ENCODE measurements at regions of chr2 and their contacts with region 1.

Region 1: GRCh38 chr2:121309801-121310200 is 24.8 kb upstream of the TFCP2L1 start:
- DNase-seq: no peak
- H3K4me3 ChIP-seq: no peak overlapping the region
- H3K27ac ChIP-seq: no peak overlapping the region
- H3K4me1 ChIP-seq: no peaks in the 10 kb centered on the region
- H3K27me3 ChIP-seq: peaks cover 9% of the 10 kb centered on the region
- CTCF ChIP-seq: no peak
- EP300 ChIP-seq: no peak
- POLR2A ChIP-seq: no peak

Region 2: DNA sequence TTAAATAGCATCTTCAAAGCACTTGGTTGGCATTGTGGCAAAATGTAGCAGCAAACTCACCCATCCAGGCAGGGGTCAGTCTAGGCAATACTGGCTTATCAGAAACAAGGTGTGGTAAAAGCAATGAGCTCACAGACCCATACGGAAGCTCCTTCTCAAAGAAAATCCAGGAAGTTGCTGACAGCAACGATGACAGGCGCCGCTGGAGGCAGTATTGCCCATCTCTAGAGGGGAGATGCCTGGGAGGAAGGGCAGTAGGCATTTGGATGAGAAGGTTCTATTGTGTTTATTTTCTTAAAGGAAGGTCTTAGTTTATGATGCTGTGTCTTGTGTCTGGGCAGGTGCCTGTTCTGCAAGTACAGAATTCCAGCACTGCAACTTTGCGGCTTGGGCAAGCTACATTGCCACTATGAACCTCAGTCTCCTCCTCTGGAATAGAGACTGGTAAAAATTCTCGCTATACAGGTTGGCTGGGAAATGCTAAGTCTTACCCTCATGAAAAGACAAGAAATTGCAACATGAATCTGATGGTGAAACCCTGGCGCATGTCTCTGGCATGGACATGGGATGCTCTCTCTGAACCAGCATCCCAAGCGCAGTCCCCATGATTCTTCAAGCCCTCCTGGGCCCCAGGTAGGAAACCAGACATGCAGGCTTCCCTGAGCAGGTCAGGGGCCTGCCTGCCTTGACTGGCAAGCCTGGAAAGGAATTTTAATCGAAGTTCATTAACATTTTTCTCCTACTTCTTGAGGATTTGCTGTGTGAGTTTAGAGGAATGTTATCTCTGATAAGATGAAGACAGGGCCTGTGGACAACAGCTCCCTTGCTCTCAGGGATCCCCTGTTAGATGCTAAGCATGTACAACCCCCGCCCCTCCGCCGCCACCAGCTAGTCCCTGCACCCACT is 180.8 kb before region 1 on chr2:
- in situ Hi-C with region 1: loop called in 2 of 4 experiments (anchors 25 kb)
- intact Hi-C with region 1: no loop called
- DNase-seq: peak; percentile 89
- H3K4me3 ChIP-seq: no peak overlapping the region
- H3K27ac ChIP-seq: peak overlapping the region in 2 of 4 donors; percentile 10 to 47
- H3K4me1 ChIP-seq: peaks cover 0 to 8% (median 3%) of the 10 kb centered on the region in 4 donors
- H3K27me3 ChIP-seq: no peaks in the 10 kb centered on the region
- CTCF ChIP-seq: peak; percentile 42 to 89 (median 63)
- EP300 ChIP-seq: peak; percentile 11
- POLR2A ChIP-seq: no peak

Region 3: GRCh38 chr2:121333834-121334558 is 24.2 kb after region 1 on chr2:
- in situ Hi-C with region 1: no loop called
- intact Hi-C with region 1: no loop called
- DNase-seq: no peak
- H3K4me3 ChIP-seq: no peak overlapping the region
- H3K27ac ChIP-seq: no peak overlapping the region
- H3K4me1 ChIP-seq: peaks cover 0 to 11% (median 2%) of the 10 kb centered on the region in 4 donors
- H3K27me3 ChIP-seq: no peaks in the 10 kb centered on the region
- CTCF ChIP-seq: no peak
- EP300 ChIP-seq: no peak
- POLR2A ChIP-seq: no peak

Region 4: DNA sequence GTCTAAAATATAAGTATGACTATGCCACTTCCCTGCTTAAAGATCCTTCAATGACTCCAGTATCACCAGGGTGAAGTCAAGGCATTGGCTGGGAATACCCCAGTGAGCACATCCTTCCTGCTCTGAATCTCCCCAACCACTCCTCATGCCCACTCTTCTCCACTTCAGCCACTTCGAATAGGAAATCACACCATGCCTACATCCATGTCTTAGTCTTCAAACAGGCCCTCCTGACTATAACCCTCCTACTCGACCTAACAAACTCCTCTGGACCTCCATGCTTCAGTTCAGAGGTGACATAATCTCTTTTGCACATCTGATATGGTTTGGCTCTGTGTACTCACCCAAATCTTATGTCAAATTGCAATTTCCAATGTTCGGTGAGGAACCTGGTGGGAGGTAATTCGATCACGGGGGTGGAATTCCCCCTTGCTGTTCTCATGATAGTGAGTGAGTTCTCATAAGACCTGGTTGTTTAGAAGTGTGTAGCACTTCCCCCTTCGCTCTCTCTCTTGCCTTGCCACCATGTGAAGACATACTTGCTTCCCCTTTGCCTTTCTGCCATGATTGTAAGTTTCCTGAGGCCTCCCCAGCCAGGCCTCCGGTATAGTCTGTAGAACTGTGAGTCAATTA is 63.0 kb after region 1 on chr2:
- in situ Hi-C with region 1: no loop called
- intact Hi-C with region 1: no loop called
- DNase-seq: no peak
- H3K4me3 ChIP-seq: no peak overlapping the region
- H3K27ac ChIP-seq: no peak overlapping the region
- H3K4me1 ChIP-seq: peaks cover 0 to 13% (median 4%) of the 10 kb centered on the region in 4 donors
- H3K27me3 ChIP-seq: no peaks in the 10 kb centered on the region
- CTCF ChIP-seq: no peak
- EP300 ChIP-seq: no peak
- POLR2A ChIP-seq: no peak

Region 5: DNA sequence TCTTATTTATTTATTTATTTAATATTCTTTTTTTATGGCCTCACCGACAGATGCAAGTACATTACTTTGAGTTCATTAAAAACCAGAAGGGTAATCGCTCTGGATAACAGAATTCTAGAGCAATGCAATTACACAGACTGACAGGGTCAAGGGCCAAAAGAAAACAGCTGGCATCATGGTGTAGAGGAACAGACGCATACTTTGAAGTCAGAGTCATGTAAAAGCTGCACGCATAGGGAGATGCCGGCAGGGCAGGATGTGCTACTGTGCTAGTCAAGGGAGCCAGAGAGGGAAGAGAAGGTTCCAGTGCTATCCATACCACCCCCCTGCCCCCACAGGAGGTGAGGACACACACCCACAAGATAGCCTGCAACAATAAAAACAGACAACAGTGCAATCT is 90.4 kb after region 1 on chr2:
- in situ Hi-C with region 1: no loop called
- intact Hi-C with region 1: no loop called
- DNase-seq: no peak
- H3K4me3 ChIP-seq: no peak overlapping the region
- H3K27ac ChIP-seq: no peak overlapping the region
- H3K4me1 ChIP-seq: no peaks in the 10 kb centered on the region
- H3K27me3 ChIP-seq: no peaks in the 10 kb centered on the region
- CTCF ChIP-seq: no peak
- EP300 ChIP-seq: no peak
- POLR2A ChIP-seq: no peak

Measured in transverse colon (tissue), 4 donors.